ENCODE measurements at regions of chr2 and their contacts with region 1.

Region 1: DNA sequence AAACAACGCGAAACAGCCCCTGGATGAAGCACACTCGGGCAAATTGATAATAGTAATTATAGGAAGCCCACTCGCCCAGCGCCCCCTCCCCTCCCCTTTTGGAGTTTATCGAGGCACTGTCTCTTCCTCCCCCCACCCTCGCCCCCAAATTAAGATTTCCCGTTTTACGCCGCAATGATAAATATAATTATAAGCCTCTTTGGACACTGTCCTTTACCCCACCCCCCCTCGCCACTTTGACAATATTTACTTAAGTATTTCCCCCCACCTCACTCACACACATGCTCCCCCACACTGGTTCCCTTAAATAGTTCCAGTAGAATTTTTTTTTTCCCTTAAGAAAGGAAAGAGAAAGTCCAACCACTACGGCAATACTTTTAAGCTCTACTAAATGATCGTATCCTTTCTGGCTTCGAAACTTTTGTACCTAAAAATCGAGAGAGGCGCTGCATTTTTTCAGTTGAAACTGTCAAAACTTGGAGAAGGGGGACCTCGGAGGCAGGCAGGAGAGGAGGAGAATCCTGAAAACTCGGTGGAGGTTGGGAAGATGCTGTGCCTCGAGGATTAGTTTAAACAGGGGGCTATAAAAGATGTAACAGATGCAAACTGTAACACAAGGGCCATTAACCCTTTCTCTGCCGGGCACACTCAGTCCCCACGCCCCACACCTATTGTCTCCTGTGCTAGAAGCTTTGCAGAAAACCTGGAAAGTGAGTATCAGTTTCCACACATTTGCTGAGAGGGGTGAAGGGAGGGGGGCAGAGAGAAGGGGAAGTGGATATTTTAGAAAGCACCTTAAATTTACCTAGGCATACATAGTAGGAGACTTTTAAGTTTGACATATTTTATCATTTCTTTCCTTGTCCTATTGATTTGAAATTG is 1.8 kb downstream of the ZEB2 start:
- DNase-seq: peak in 1 of 35 experiments; percentile 46
- ATAC-seq: no peak
- H3K4me3 ChIP-seq: peak overlapping the region; percentile 75 to 83
- H3K4me3 Mint-ChIP-seq: no peak overlapping the region
- H3K27ac ChIP-seq: peak overlapping the region; percentile 87
- H3K27ac Mint-ChIP-seq: peak overlapping the region in 1 of 2 donors; percentile 78
- H3K4me1 ChIP-seq: peaks cover 15 to 38% of the 10 kb centered on the region in 2 experiments
- H3K4me1 Mint-ChIP-seq: peaks cover 23 to 46% (median 24%) of the 10 kb centered on the region in 3 donors
- H3K27me3 ChIP-seq: peaks cover 2 to 45% of the 10 kb centered on the region in 2 experiments
- H3K27me3 Mint-ChIP-seq: peaks cover 55 to 58% of the 10 kb centered on the region in 2 donors

Region 2: GRCh38 chr2:144607891-144608521 is 89.9 kb after region 1 on chr2:
- CTCF ChIA-PET with region 1: no interaction called
- POLR2A ChIA-PET with region 1: interaction called in 1 of 2 experiments, 10 read pairs
- DNase-seq: no peak
- ATAC-seq: no peak
- H3K4me3 ChIP-seq: no peak overlapping the region
- H3K4me3 Mint-ChIP-seq: no peak overlapping the region
- H3K27ac ChIP-seq: no peak overlapping the region
- H3K27ac Mint-ChIP-seq: no peak overlapping the region
- H3K4me1 ChIP-seq: no peaks in the 10 kb centered on the region
- H3K4me1 Mint-ChIP-seq: no peaks in the 10 kb centered on the region
- H3K27me3 ChIP-seq: no peaks in the 10 kb centered on the region
- H3K27me3 Mint-ChIP-seq: no peaks in the 10 kb centered on the region

Region 3: DNA sequence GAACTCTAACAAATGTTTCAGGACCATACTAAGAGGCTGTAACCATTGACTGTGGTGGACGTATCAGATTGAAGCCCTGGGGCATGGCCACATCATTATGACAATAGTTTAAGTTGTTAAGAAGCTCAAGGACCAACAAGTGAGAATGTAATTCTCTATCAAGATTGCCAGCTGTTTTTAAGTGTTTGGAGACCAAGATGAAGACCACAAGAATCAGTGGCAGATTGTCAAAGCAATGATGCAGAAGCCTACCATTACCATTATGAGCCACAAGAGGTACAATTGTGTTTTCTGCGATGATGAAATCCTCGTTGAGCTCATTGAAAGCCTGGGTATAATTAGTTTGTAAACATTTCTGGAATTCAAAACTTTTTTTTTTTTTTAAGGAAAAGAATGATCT is 262.9 kb after region 1 on chr2:
- CTCF ChIA-PET with region 1: no interaction called
- POLR2A ChIA-PET with region 1: no interaction called
- DNase-seq: no peak
- ATAC-seq: no peak
- H3K4me3 ChIP-seq: no peak overlapping the region
- H3K4me3 Mint-ChIP-seq: no peak overlapping the region
- H3K27ac ChIP-seq: no peak overlapping the region
- H3K27ac Mint-ChIP-seq: no peak overlapping the region
- H3K4me1 ChIP-seq: no peaks in the 10 kb centered on the region
- H3K4me1 Mint-ChIP-seq: no peaks in the 10 kb centered on the region
- H3K27me3 ChIP-seq: peaks cover 0 to 5% of the 10 kb centered on the region in 2 experiments
- H3K27me3 Mint-ChIP-seq: peaks cover 2 to 4% of the 10 kb centered on the region in 2 donors

Measured in T-cell (primary cell).